Activated CD4-positive, alpha-beta memory T cell treated with anti-CD3 and anti-CD28 coated beads for 36 hours (primary cell): ENCODE measurements at regions of chr1 and their contacts with region 1.

Region 1: GRCh38 chr1:246428542-246429308 is 78.4 kb downstream of the SMYD3 start:
- DNase-seq: peak; percentile 78
- H3K4me3 Mint-ChIP-seq: no peak overlapping the region
- H3K27ac Mint-ChIP-seq: no peak overlapping the region
- H3K4me1 Mint-ChIP-seq: peaks cover 9% of the 10 kb centered on the region
- H3K27me3 Mint-ChIP-seq: no peaks in the 10 kb centered on the region

Region 2: DNA sequence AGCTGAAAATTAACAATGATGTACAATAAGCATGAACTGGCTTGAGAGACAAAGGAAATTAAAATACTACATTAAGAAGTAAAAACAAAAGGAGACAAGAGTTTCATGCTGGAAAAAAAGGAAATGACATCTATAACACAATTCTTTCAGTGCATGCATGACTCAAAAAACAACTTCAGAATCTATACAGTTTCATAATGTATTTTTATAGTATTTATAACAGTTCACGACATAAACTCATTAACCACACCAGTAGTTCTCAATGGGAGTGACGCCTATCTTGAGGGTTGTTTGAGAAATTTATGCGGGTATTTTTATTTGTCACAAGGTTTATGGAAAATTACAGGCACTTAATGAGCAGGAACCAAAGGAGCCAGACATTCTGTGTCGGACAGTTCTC is 90.2 kb before region 1 on chr1:
- CTCF ChIA-PET with region 1: no interaction called
- POLR2A ChIA-PET with region 1: no interaction called
- intact Hi-C with region 1: loop called (anchors 2 kb)
- DNase-seq: no peak
- H3K4me3 Mint-ChIP-seq: no peak overlapping the region
- H3K27ac Mint-ChIP-seq: peak overlapping the region; percentile 60
- H3K4me1 Mint-ChIP-seq: peaks cover 31% of the 10 kb centered on the region
- H3K27me3 Mint-ChIP-seq: no peaks in the 10 kb centered on the region

Region 3: DNA sequence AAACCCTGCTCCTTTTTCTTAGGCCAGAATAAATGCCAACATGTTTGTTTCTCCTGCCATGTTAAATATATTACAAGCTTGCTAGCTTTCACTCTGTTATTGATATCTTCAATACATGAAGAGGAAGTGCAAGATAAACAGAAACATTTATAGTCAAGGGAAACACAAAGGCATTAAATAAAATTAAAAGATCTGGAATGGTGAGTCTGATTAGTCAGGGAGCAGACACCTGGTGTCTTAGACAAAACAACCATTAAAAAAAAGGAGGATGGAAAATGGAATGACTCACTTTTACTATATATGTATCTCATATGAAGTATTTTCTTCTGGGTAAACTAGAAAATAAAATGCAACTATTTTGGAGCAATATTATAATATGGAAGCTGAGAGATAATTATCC is 44.9 kb before region 1 on chr1:
- CTCF ChIA-PET with region 1: no interaction called
- POLR2A ChIA-PET with region 1: no interaction called
- intact Hi-C with region 1: loop called (anchors 2 kb)
- DNase-seq: no peak
- H3K4me3 Mint-ChIP-seq: no peak overlapping the region
- H3K27ac Mint-ChIP-seq: no peak overlapping the region
- H3K4me1 Mint-ChIP-seq: peaks cover 11% of the 10 kb centered on the region
- H3K27me3 Mint-ChIP-seq: no peaks in the 10 kb centered on the region

Region 4: GRCh38 chr1:246476771-246477170 is 48.0 kb after region 1 on chr1:
- CTCF ChIA-PET with region 1: no interaction called
- POLR2A ChIA-PET with region 1: no interaction called
- intact Hi-C with region 1: loop called (anchors 1 kb)
- DNase-seq: no peak
- H3K4me3 Mint-ChIP-seq: no peak overlapping the region
- H3K27ac Mint-ChIP-seq: no peak overlapping the region
- H3K4me1 Mint-ChIP-seq: peaks cover 22% of the 10 kb centered on the region
- H3K27me3 Mint-ChIP-seq: no peaks in the 10 kb centered on the region